ENCODE measurements at regions of chr5 and their contacts with region 1.

Region 1: GRCh38 chr5:178120868-178121357 is 7.6 kb downstream of the N4BP3 start:
- DNase-seq: peak; percentile 90
- ATAC-seq: peak; percentile 92
- H3K4me3 Mint-ChIP-seq: no peak overlapping the region
- H3K27ac Mint-ChIP-seq: no peak overlapping the region
- H3K4me1 Mint-ChIP-seq: peaks cover 22% of the 10 kb centered on the region
- H3K27me3 Mint-ChIP-seq: no peaks in the 10 kb centered on the region

Region 2: GRCh38 chr5:178106556-178107250 is 14.2 kb before region 1 on chr5:
- CTCF ChIA-PET with region 1: interaction called, 17 read pairs
- DNase-seq: no peak
- ATAC-seq: no peak
- H3K4me3 Mint-ChIP-seq: no peak overlapping the region
- H3K27ac Mint-ChIP-seq: no peak overlapping the region
- H3K4me1 Mint-ChIP-seq: peaks cover 1% of the 10 kb centered on the region
- H3K27me3 Mint-ChIP-seq: peaks cover 24% of the 10 kb centered on the region

Region 3: DNA sequence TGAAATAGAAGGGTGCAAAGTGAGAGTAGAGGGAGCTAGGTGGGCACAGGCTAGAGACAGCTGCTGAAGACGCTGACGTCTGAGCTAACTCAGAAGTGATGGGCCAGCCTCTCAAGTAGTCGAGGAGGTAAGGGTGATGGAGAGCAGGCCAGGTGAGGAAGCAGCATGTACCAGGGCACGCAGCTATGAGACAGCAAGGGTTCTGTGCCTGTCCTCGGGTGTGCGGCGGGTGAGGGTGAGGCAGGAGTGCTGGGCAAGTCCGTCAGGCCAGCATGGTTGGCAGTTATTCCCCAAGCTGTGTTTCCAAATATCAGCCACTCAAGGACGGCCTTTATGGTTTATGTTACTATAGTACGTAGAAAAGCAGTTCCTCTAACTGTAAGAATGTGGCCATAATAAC is 16.1 kb after region 1 on chr5:
- CTCF ChIA-PET with region 1: interaction called, 38 read pairs
- DNase-seq: no peak
- ATAC-seq: no peak
- H3K4me3 Mint-ChIP-seq: no peak overlapping the region
- H3K27ac Mint-ChIP-seq: no peak overlapping the region
- H3K4me1 Mint-ChIP-seq: no peaks in the 10 kb centered on the region
- H3K27me3 Mint-ChIP-seq: no peaks in the 10 kb centered on the region

Region 4: GRCh38 chr5:178146020-178146820 is 25.3 kb after region 1 on chr5:
- CTCF ChIA-PET with region 1: interaction called, 38 read pairs
- DNase-seq: peak; percentile 81
- ATAC-seq: peak; percentile 89
- H3K4me3 Mint-ChIP-seq: no peak overlapping the region
- H3K27ac Mint-ChIP-seq: no peak overlapping the region
- H3K4me1 Mint-ChIP-seq: peaks cover 31% of the 10 kb centered on the region
- H3K27me3 Mint-ChIP-seq: no peaks in the 10 kb centered on the region

Region 5: DNA sequence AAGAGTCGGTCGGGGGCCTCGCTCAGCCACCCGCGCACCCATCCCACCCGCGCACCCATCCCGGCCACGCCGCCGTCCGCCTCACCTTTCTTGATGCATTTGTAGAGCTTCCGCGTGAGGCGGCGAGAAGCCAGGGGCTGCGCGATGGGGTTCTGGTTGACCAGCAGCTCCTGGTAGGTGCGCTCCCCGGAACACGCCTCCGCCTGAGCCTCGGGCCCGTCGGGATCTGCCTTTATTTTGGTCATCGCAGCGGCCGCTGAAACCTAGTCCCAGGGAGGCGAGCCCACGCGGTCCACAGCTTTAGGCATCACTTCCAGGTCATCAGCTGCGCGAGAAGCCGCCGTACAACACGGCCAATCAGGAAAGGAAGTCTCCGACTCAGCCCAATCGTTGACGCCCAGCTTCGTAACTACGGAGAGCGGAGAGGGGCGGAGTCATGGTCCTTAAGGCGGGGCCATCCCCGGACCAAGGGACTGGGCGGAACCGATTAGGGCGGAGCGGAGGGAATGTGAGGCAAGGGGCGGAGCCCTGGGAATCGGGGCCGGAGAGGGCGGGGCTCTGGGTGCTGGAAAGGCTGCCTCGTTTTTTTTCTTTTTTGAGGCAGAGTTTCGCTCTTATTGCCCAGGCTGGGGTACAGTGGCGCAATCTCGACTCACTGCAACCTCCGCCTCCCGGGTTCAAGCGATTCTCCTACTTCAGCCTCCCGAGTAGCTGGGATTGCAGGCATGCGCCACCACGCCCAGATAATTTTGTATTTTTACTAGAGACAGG is 32.8 kb after region 1 on chr5 and contains the start of gene NHP2:
- CTCF ChIA-PET with region 1: interaction called, 22 read pairs
- DNase-seq: peak; percentile 99
- ATAC-seq: peak; percentile 100
- H3K4me3 Mint-ChIP-seq: peak within 1 kb of the TSS; percentile 97
- H3K27ac Mint-ChIP-seq: peak within 1 kb of the TSS; percentile 87
- H3K4me1 Mint-ChIP-seq: peaks cover 40% of the 10 kb centered on the region
- H3K27me3 Mint-ChIP-seq: no peaks in the 10 kb centered on the region
- total RNA-seq, gene NHP2: 144 to 168 TPM

Measured in activated CD8-positive, alpha-beta memory T cell treated with anti-CD3 and anti-CD28 coated beads, Interleukin-2, amount 10 ng/mL, durations not matched to agents 7 days and 5 days (primary cell).